ENCODE measurements at regions of chr1 and their contacts with region 1.

Region 1: GRCh38 chr1:155951753-155952504 is 10.5 kb downstream of the RXFP4 start:
- DNase-seq: no peak
- H3K4me3 ChIP-seq: no peak overlapping the region
- H3K27ac ChIP-seq: peak overlapping the region in 1 of 2 experiments; percentile 11
- H3K4me1 ChIP-seq: peaks cover 0 to 5% (median 4%) of the 10 kb centered on the region in 4 experiments
- H3K27me3 ChIP-seq: no peaks in the 10 kb centered on the region

Region 2: DNA sequence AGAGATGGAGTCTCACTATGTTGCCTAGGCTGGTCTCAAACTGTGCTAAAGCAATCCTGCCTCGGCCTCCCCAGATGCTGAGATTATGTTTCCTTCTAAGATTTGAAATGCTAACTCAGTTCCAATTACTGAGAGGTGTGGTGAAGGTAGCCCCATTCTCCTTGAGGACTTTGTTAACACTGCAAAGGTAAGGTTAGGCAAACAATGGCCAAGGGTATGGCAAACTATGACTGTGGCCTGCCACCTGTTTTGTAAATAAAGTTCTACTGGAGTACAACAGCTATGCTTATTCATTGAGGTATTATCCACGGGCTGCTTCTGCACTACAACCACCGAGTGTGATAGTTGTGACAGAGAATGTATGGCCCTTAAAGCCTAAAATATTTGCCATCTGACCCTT is 31.2 kb before region 1 on chr1:
- CTCF ChIA-PET with region 1: no interaction called
- POLR2A ChIA-PET with region 1: no interaction called
- DNase-seq: no peak
- H3K4me3 ChIP-seq: no peak overlapping the region
- H3K27ac ChIP-seq: no peak overlapping the region
- H3K4me1 ChIP-seq: no peaks in the 10 kb centered on the region
- H3K27me3 ChIP-seq: no peaks in the 10 kb centered on the region

Region 3: GRCh38 chr1:155961937-155962336 is 10.0 kb after region 1 on chr1:
- CTCF ChIA-PET with region 1: interaction called, 18 read pairs
- POLR2A ChIA-PET with region 1: no interaction called
- DNase-seq: peak in 2 of 3 donors; percentile 31 to 53
- H3K4me3 ChIP-seq: no peak overlapping the region
- H3K27ac ChIP-seq: peak overlapping the region in 1 of 2 experiments; percentile 40
- H3K4me1 ChIP-seq: peaks cover 0 to 28% (median 13%) of the 10 kb centered on the region in 4 experiments
- H3K27me3 ChIP-seq: no peaks in the 10 kb centered on the region

Region 4: GRCh38 chr1:155970531-155971167 is 18.7 kb after region 1 on chr1:
- CTCF ChIA-PET with region 1: interaction called, 17 read pairs
- POLR2A ChIA-PET with region 1: interaction called, 3 read pairs
- DNase-seq: peak; percentile 75 to 91 (median 90)
- H3K4me3 ChIP-seq: peak overlapping the region in 6 of 7 experiments; percentile 12 to 62 (median 33)
- H3K27ac ChIP-seq: peak overlapping the region in 1 of 2 experiments; percentile 95
- H3K4me1 ChIP-seq: peaks cover 39 to 95% (median 92%) of the 10 kb centered on the region in 4 experiments
- H3K27me3 ChIP-seq: no peaks in the 10 kb centered on the region

Region 5: DNA sequence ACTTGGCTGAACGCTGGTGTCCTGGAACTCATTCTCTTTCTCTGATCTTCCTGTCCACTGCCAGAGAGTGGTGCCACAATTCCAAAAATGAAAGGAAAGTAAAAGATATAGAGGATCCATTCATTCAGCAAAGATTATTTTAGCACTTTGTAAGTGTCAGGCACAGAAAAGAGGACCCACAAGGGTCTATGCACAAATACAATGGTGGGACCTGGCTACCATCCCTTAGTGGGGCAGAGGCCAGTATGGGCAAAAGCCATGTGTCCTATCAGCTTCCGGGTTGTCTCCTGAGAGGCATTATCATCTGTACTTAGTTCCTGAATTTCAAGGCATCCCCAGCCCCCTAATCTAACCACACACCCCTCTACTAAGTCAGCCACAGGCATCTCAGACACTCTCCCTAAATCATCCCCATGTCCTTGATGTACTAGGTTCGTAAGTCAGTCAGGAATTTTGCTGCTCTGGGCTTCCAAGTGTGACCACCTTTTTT is 49.8 kb after region 1 on chr1:
- CTCF ChIA-PET with region 1: no interaction called
- POLR2A ChIA-PET with region 1: no interaction called
- DNase-seq: peak in 2 of 3 donors; percentile 56 to 62
- H3K4me3 ChIP-seq: no peak overlapping the region
- H3K27ac ChIP-seq: no peak overlapping the region
- H3K4me1 ChIP-seq: peaks cover 3 to 18% (median 12%) of the 10 kb centered on the region in 4 experiments
- H3K27me3 ChIP-seq: no peaks in the 10 kb centered on the region

Region 6: DNA sequence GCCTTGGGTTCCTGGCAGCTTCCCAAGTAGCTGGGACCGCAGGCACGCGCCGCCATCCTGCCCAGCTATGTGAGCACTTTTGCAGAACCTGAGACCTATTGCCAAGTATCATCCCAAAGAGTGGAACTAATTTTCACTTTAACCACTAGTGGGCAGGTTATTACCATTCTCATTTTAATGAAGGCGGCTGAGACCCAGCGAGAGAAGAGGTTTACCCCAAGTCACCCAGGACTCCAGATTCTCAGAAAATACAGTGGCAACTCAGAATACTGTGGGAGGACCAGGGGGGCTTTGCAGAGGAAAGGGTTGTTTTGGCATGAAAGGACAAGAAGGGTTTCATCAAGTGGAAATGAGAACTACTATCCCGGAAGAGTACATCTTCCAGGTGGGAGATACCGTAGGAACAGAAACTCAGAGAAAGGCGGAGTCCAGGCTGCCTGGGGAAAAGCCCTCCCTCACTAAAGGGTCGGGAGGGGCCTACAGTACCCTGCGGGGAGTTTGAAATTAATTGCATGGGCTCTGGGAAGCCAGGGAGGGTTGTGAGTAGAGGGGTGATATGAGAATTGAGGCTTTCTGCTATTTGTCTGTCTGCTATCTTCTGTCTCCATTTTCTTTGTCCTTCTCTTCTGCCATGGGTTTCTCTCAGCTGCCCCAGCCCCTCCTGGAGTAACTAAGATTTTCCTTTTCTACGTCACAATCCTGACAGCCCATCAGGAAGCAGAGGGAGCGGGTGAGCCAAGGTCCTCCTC is 194.3 kb after region 1 on chr1:
- CTCF ChIA-PET with region 1: no interaction called
- POLR2A ChIA-PET with region 1: no interaction called
- DNase-seq: peak; percentile 86 to 93 (median 92)
- H3K4me3 ChIP-seq: peak overlapping the region in 5 of 7 experiments; percentile 12 to 57 (median 32)
- H3K27ac ChIP-seq: peak overlapping the region in 1 of 2 experiments; percentile 66
- H3K4me1 ChIP-seq: peaks cover 0 to 48% (median 38%) of the 10 kb centered on the region in 4 experiments
- H3K27me3 ChIP-seq: no peaks in the 10 kb centered on the region

Measured in common myeloid progenitor, CD34-positive (primary cell).